ENCODE measurements at regions of chr12 and their contacts with region 1.

Region 1: DNA sequence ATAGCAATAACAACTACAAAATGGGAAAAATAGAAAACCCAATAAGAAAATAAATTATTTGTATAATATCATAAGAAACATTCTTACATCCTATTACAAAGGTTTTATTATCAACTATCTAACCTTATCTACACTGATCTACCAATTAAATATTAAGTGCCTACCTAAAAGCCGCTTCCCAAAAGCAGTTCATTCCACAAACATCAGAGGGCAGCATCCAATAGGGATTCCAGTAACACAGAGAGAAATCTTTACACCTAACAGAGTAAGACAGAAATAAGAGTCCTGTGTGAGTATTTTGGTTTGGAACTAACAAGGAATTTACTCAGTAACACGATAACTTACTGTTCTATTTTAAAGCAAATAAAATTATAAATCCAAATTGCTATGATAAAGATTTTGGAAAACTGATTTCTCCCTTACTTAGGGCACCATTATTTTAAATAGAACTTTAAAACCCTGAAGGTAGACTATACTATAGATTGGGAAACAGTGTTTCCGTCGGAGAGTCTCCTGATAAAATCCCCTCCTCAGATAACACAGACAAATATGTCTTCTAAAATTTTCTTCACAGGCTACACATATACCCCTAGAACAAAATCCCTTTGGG is 15.0 kb downstream of the GXYLT1 start:
- DNase-seq: peak; percentile 41 to 46
- H3K4me3 ChIP-seq: no peak overlapping the region
- H3K27ac ChIP-seq: peak overlapping the region; percentile 64
- H3K4me1 ChIP-seq: peaks cover 21% of the 10 kb centered on the region
- H3K27me3 ChIP-seq: no peaks in the 10 kb centered on the region
- CTCF ChIP-seq: peak; percentile 88

Region 2: DNA sequence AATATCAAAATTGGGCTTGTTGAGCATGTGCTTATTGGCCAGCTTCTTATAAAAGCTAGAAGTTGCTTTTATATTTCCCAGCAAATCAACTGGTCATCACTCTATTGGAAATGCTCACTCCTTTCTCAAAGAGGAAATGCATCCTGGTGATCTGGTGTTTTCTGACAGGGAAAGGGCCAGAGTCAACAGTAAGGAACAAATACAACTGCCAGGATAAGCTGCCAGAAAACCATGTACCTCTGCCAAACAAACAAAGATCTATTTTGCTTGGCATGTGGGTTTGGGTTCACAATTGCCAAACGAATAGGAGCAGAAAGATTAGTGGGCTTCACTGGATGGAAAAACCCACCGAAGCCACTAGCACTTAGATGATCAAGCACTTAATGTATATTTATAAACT is 1068.5 kb before region 1 on chr12:
- CTCF ChIA-PET with region 1: interaction called, 10 read pairs
- POLR2A ChIA-PET with region 1: no interaction called
- intact Hi-C with region 1: no loop called
- DNase-seq: no peak
- H3K4me3 ChIP-seq: no peak overlapping the region
- H3K27ac ChIP-seq: no peak overlapping the region
- H3K4me1 ChIP-seq: no peaks in the 10 kb centered on the region
- H3K27me3 ChIP-seq: no peaks in the 10 kb centered on the region
- CTCF ChIP-seq: no peak

Region 3: DNA sequence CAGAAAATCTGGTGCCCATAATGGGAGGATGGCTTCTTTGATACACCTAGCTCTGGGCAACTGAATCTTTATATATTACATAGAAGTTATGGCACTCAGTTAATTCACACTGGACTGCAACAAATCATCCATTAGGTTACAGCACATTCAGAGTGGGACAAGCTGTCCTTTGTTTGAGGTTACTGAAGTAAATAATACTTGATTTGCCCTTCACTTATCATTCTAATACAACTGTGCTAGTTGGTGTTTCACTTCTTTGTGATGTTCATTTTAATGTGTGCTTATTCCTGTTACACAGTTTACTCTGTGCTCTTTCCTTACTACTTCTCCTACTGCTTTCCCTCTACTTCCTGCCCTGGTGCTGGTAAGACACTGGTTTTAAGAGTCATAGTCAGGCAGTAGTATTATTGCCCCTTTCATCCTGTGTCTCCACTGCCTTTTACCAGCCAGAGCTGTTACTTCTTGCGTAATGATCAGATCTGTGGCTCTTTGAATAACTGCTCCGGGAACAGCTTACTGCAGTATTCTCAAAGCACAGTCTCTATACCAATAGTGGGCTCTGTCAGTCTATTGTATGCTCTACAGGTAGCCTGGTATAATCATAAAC is 51.4 kb after region 1 on chr12:
- CTCF ChIA-PET with region 1: no interaction called
- POLR2A ChIA-PET with region 1: no interaction called
- intact Hi-C with region 1: loop called (anchors 10 kb)
- DNase-seq: no peak
- H3K4me3 ChIP-seq: no peak overlapping the region
- H3K27ac ChIP-seq: no peak overlapping the region
- H3K4me1 ChIP-seq: no peaks in the 10 kb centered on the region
- H3K27me3 ChIP-seq: no peaks in the 10 kb centered on the region
- CTCF ChIP-seq: no peak

Region 4: GRCh38 chr12:42332301-42333285 is 202.9 kb after region 1 on chr12:
- CTCF ChIA-PET with region 1: no interaction called
- POLR2A ChIA-PET with region 1: no interaction called
- intact Hi-C with region 1: loop called (anchors 1 kb)
- DNase-seq: peak in 1 of 2 experiments; percentile 8
- H3K4me3 ChIP-seq: no peak overlapping the region
- H3K27ac ChIP-seq: no peak overlapping the region
- H3K4me1 ChIP-seq: peaks cover 1% of the 10 kb centered on the region
- H3K27me3 ChIP-seq: no peaks in the 10 kb centered on the region
- CTCF ChIP-seq: peak; percentile 74